Aorta (tissue), 5 donors: ENCODE measurements at regions of chr20 and their contacts with region 1.

Region 1: GRCh38 chr20:43749734-43750294 is 23.0 kb upstream of the GTSF1L start:
- DNase-seq: peak; percentile 81 to 96
- ATAC-seq: peak; percentile 88
- H3K4me3 ChIP-seq: no peak overlapping the region
- H3K27ac ChIP-seq: no peak overlapping the region
- H3K4me1 ChIP-seq: no peaks in the 10 kb centered on the region
- H3K27me3 ChIP-seq: no peaks in the 10 kb centered on the region

Region 2: GRCh38 chr20:43840382-43841070 is 90.7 kb after region 1 on chr20:
- intact Hi-C with region 1: loop called in 1 of 2 experiments (anchors 5 kb)
- DNase-seq: no peak
- ATAC-seq: no peak
- H3K4me3 ChIP-seq: no peak overlapping the region
- H3K27ac ChIP-seq: no peak overlapping the region
- H3K4me1 ChIP-seq: no peaks in the 10 kb centered on the region
- H3K27me3 ChIP-seq: no peaks in the 10 kb centered on the region

Region 3: DNA sequence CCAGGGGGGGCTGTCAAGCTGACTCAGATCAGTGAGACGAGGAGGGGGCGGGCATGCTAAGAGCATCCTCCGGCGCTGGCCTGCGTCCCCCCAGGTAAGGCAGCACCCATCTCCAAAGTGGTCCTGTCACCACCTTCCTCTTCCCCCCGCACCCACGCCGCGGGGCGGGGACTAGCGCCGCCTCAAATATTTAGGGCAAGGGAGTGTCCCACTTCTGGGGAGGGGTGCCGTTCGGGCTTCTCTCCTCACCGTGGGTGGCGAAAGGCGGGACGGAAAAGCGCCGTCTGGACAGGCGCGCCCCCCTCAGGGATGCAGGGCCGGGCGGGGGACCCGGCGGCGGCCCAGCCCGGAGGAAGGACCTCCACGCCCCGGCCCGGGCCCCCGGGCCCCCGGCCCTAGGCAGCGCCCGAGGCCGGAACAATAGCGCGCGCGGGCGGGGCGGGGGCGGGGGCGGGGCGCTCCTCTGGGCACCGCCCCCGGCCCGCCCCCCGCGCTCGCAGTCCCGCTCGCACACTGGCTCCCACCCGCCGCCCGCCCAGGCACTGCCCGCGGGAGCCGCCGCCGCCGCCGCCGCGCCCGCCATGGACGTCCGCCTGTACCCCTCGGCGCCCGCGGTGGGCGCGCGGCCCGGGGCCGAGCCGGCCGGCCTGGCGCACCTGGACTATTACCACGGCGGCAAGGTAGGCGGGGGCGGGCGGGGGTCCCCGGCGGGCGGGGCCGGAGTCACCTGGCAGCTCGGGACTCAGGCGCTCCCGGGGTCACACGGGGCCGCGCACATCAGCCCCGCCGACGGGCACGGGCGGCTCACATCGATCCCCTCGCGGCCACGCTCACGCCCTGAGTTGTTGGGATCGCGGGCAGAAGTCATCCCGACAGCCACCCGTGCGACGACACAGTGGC is 164.7 kb after region 1 on chr20 and contains the start of gene TOX2:
- intact Hi-C with region 1: loop called in 1 of 2 experiments (anchors 5 kb)
- DNase-seq: peak; percentile 65 to 83
- ATAC-seq: peak; percentile 47
- H3K4me3 ChIP-seq: peak within 1 kb of the TSS; percentile 38 to 83
- H3K27ac ChIP-seq: no peak within 1 kb of the TSS
- H3K4me1 ChIP-seq: no peaks in the 10 kb centered on the region
- H3K27me3 ChIP-seq: no peaks in the 10 kb centered on the region
- total RNA-seq, gene TOX2: 11.9 to 17.2 TPM

Region 4: DNA sequence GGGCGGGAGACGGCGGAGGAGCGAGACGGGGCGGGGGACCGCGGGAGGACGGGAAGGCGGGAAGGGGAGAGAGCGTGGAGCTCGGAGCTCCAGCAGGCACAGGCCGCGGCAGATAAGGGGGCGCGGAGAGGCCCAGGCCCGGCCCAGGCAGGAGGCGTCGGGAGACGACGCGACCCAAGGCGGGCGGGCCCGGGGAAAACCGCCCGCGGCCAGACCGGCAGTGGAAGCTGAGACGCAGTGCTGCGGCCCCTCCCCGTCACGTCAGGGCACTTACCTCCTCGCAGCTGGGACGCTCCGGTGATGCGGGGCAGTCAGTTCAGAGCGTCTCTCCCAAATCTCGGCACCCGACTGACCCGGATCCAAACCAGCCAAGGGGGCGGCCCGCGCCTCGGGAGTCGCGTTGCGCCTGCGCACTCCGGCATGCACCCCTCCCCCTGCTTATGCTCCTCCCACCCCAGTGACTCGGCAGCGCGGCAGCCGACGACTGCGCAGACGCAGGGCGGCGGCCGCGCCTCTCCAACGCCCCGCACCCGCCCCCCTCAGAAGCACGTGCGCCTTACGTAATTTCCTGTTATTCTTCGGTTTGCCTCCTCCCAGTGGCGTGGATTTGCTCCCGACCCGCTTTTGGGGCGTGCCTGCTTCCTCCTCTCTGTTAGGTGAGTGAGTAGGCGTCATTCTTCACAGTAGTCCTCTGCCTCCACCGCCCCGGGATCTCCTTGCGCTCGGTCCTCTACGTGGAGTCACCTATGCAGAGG is 460.8 kb after region 1 on chr20 and contains the start of gene OSER1:
- intact Hi-C with region 1: loop called in 1 of 2 experiments (anchors 10 kb)
- DNase-seq: peak; percentile 98 to 99
- ATAC-seq: peak; percentile 98
- H3K4me3 ChIP-seq: peak within 1 kb of the TSS; percentile 79 to 92
- H3K27ac ChIP-seq: peak within 1 kb of the TSS; percentile 78 to 92
- H3K4me1 ChIP-seq: peaks cover 0 to 7% of the 10 kb centered on the region in 2 donors
- H3K27me3 ChIP-seq: no peaks in the 10 kb centered on the region
- total RNA-seq, gene OSER1: 26.7 to 34.2 TPM